ENCODE measurements at regions of chr1 and their contacts with region 1.

Region 1: GRCh38 chr1:114346480-114347029 is 164.4 kb downstream of the TRIM33 start:
- DNase-seq: peak; percentile 92 to 99 (median 93)
- ATAC-seq: peak; percentile 96 to 99 (median 98)
- H3K4me3 ChIP-seq: peak overlapping the region; percentile 30 to 67 (median 56)
- H3K27ac ChIP-seq: peak overlapping the region; percentile 41 to 88 (median 72)
- H3K4me1 ChIP-seq: peaks cover 0 to 23% (median 9%) of the 10 kb centered on the region in 12 donors
- H3K27me3 ChIP-seq: no peaks in the 10 kb centered on the region
- CTCF ChIP-seq: peak; percentile 100
- POLR2A ChIP-seq: no peak

Region 2: DNA sequence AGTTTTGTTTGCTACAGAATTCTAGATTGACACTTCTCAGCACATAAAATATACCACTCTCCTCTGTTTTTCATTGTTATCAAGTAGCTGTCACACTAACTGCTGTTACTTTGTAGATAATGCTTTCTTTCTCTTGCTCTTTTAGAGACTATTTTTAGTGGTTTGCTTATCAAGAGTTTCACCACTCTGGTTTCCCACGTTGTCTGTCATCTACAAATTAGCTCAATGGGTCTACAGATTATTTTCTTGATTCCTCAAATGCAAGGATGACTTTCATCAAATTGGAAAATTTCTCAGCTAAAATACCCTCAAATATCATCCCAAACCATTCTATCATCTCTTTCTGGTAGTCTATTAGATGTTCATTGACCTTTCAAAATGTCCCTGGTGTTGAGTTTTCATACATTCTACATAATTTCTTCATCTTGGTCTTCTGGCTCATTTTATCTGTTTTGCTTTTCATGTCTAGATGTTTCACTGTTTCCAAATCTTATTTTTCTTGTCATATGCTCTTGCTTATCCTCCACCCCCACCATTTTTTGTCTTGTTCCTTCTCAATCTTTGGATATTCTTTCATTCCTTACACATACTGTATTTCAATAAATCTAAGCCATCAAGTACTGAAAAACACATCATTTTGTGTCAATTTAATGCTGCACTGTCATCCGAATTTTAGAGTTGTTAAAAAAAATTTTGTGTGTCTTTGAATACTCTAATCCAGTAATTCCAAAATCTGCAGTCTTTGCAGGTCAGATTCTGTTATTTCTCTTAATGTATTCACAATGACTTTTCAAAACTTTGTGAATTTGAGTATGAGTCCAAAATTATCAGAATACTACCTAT is 42.1 kb after region 1 on chr1:
- intact Hi-C with region 1: loop called in 1 of 10 experiments (anchors 2 kb)
- DNase-seq: no peak
- ATAC-seq: no peak
- H3K4me3 ChIP-seq: no peak overlapping the region
- H3K27ac ChIP-seq: no peak overlapping the region
- H3K4me1 ChIP-seq: peaks cover 0 to 13% (median 0%) of the 10 kb centered on the region in 12 donors
- H3K27me3 ChIP-seq: no peaks in the 10 kb centered on the region
- CTCF ChIP-seq: no peak
- POLR2A ChIP-seq: no peak

Region 3: GRCh38 chr1:114467488-114467887 is 120.9 kb after region 1 on chr1:
- intact Hi-C with region 1: no loop called
- DNase-seq: no peak
- ATAC-seq: no peak
- H3K4me3 ChIP-seq: no peak overlapping the region
- H3K27ac ChIP-seq: peak overlapping the region in 1 of 12 donors; percentile 21
- H3K4me1 ChIP-seq: peaks cover 0 to 34% (median 18%) of the 10 kb centered on the region in 12 donors
- H3K27me3 ChIP-seq: no peaks in the 10 kb centered on the region
- CTCF ChIP-seq: no peak
- POLR2A ChIP-seq: no peak

Region 4: DNA sequence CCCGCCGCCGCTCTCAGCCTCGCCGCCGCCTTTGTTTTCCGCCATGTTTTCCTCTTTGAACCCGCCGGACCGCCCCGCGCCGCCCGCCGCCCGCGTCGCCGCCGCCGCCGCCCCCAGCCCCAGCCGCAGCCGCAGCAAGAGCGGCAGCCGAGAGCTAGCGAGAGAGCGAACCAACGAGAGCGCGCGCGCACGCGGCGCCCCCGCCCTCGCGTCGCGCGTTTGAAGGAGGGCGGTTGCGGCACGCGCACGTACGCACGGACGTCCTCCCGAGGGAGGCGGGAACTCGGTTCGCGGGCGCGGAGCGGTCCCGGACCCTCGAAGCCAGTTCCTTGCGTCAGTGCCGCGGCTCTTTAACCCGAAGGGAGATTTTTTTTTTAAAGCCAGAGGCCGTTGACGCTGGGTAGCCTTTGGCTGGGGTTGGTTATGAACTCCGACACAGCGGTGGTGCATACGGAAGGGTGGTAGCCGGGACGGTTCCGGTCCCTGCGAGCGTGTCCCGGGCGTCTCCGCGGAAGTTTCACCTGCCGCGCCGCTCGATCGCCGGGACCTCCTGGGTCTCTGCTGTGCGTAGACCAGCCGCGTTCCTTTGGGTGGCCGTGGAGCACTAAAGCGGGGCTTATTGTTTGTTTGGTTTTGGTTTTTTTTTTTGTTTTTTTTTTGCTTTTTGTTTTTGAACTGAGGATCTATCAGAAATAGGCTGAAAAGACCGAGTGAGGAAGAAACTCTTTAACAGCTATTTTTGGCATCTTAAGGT is 164.7 kb after region 1 on chr1 and contains the start of gene TRIM33:
- intact Hi-C with region 1: loop called in 2 of 10 experiments (anchors 5 kb)
- DNase-seq: peak; percentile 91 to 96 (median 94)
- ATAC-seq: peak; percentile 94 to 96 (median 95)
- H3K4me3 ChIP-seq: peak within 1 kb of the TSS; percentile 76 to 100 (median 96)
- H3K27ac ChIP-seq: peak within 1 kb of the TSS; percentile 63 to 99 (median 96)
- H3K4me1 ChIP-seq: peaks cover 0 to 45% (median 31%) of the 10 kb centered on the region in 12 donors
- H3K27me3 ChIP-seq: no peaks in the 10 kb centered on the region
- CTCF ChIP-seq: peak in 2 of 12 donors; percentile 7 to 10
- POLR2A ChIP-seq: peak in 1 of 2 donors; percentile 76
- total RNA-seq, gene TRIM33: 12.1 to 30.8 (median 21.4) TPM

Region 5: GRCh38 chr1:114581335-114582287 is 235.1 kb after region 1 on chr1 and contains the start of gene BCAS2:
- intact Hi-C with region 1: loop called in 3 of 10 experiments (anchors 5 to 10 kb)
- DNase-seq: peak; percentile 95 to 98 (median 97)
- ATAC-seq: peak; percentile 98 to 99 (median 99)
- H3K4me3 ChIP-seq: peak within 1 kb of the TSS; percentile 41 to 89 (median 68)
- H3K27ac ChIP-seq: peak within 1 kb of the TSS; percentile 68 to 95 (median 88)
- H3K4me1 ChIP-seq: peaks cover 0 to 37% (median 22%) of the 10 kb centered on the region in 12 donors
- H3K27me3 ChIP-seq: no peaks in the 10 kb centered on the region
- CTCF ChIP-seq: no peak
- POLR2A ChIP-seq: peak in 1 of 2 donors; percentile 88
- total RNA-seq, gene BCAS2: 28.7 to 41.6 (median 34.4) TPM

Region 6: GRCh38 chr1:114716304-114717170 is 370.0 kb after region 1 on chr1 and contains the start of gene NRAS:
- intact Hi-C with region 1: loop called in 1 of 10 experiments (anchors 5 kb)
- DNase-seq: peak; percentile 95 to 97 (median 96)
- ATAC-seq: peak; percentile 98 to 100 (median 100)
- H3K4me3 ChIP-seq: peak within 1 kb of the TSS; percentile 61 to 94 (median 83)
- H3K27ac ChIP-seq: peak within 1 kb of the TSS; percentile 37 to 96 (median 88)
- H3K4me1 ChIP-seq: peaks cover 0 to 38% (median 19%) of the 10 kb centered on the region in 12 donors
- H3K27me3 ChIP-seq: no peaks in the 10 kb centered on the region
- CTCF ChIP-seq: no peak
- POLR2A ChIP-seq: peak in 1 of 2 donors; percentile 57
- total RNA-seq, gene NRAS: 7.1 to 25.7 (median 10.2) TPM

Measured in heart left ventricle (tissue), 16 donors.